MCF 10A (cell line): ENCODE measurements at regions of chr9 and their contacts with region 1.

Region 1: GRCh38 chr9:26744191-26744965 is 148.2 kb downstream of the CAAP1 start:
- DNase-seq: peak; percentile 47
- H3K4me3 Mint-ChIP-seq: no peak overlapping the region
- H3K27ac Mint-ChIP-seq: no peak overlapping the region
- H3K4me1 Mint-ChIP-seq: peaks cover 9% of the 10 kb centered on the region
- H3K27me3 Mint-ChIP-seq: peaks cover 33% of the 10 kb centered on the region
- CTCF ChIP-seq: peak; percentile 69

Region 2: DNA sequence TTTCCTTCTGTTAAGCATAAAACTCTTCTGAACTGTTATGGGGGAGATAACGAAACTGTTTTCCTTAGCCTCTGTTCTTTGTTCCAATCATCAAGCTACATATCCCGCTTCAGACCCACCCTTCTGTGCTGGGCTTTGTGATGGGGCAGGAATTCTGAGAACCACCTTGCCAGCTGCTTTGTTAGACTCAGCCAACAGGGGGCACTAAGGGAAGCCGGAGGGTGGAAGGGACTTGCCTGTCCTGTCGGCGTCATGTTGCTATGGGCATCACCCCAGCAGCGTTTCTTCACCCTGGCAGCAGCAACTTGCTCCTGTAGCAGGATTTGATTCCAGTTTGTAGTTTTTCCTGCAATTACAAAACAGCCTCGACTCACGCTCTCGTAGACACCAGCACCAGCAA is 20.9 kb before region 1 on chr9:
- CTCF ChIA-PET with region 1: no interaction called
- POLR2A ChIA-PET with region 1: no interaction called
- intact Hi-C with region 1: no loop called
- DNase-seq: peak; percentile 72
- H3K4me3 Mint-ChIP-seq: peak overlapping the region; percentile 50
- H3K27ac Mint-ChIP-seq: no peak overlapping the region
- H3K4me1 Mint-ChIP-seq: no peaks in the 10 kb centered on the region
- H3K27me3 Mint-ChIP-seq: peaks cover 64% of the 10 kb centered on the region
- CTCF ChIP-seq: peak; percentile 48

Region 3: DNA sequence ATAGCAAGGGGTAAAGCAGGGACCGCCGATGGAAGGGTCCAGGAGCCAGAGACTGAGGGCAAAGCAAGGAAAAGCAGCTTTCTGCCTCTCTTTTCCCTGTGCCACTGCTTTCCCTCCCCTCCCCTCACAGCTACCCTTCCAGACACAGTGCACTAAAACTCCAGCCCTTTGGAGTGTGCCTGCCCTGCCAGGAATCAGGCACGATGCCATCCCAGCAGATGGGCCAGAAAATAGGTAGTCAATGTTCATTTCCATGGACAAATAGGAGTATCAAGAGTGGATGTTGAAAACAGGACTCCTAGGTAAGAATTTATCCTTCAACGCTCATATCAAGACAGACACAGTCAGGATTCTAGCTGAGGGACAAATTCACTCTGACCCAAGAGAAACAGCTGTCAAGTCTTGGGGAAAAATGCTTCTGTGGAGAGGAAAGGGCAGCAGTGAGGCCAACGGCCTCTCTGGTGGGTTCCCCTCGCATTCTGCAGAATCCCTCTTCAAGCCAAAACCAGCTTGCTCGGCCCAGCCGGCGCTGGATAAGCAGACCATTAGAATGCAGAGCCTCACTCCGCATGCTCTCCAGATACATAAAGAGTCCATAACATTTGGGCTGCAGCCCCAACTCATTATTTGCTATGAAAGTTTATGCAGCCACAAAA is 10.3 kb after region 1 on chr9:
- CTCF ChIA-PET with region 1: no interaction called
- POLR2A ChIA-PET with region 1: no interaction called
- intact Hi-C with region 1: no loop called
- DNase-seq: no peak
- H3K4me3 Mint-ChIP-seq: no peak overlapping the region
- H3K27ac Mint-ChIP-seq: no peak overlapping the region
- H3K4me1 Mint-ChIP-seq: no peaks in the 10 kb centered on the region
- H3K27me3 Mint-ChIP-seq: no peaks in the 10 kb centered on the region
- CTCF ChIP-seq: no peak

Region 4: GRCh38 chr9:26856413-26857032 is 112.1 kb after region 1 on chr9:
- CTCF ChIA-PET with region 1: interaction called, 29 read pairs
- POLR2A ChIA-PET with region 1: no interaction called
- intact Hi-C with region 1: loop called (anchors 1 kb)
- DNase-seq: peak; percentile 76
- H3K4me3 Mint-ChIP-seq: no peak overlapping the region
- H3K27ac Mint-ChIP-seq: no peak overlapping the region
- H3K4me1 Mint-ChIP-seq: no peaks in the 10 kb centered on the region
- H3K27me3 Mint-ChIP-seq: no peaks in the 10 kb centered on the region
- CTCF ChIP-seq: peak; percentile 83

Region 5: GRCh38 chr9:26863074-26863473 is 118.7 kb after region 1 on chr9:
- CTCF ChIA-PET with region 1: interaction called, 29 read pairs
- POLR2A ChIA-PET with region 1: no interaction called
- intact Hi-C with region 1: no loop called
- DNase-seq: peak; percentile 15
- H3K4me3 Mint-ChIP-seq: no peak overlapping the region
- H3K27ac Mint-ChIP-seq: no peak overlapping the region
- H3K4me1 Mint-ChIP-seq: no peaks in the 10 kb centered on the region
- H3K27me3 Mint-ChIP-seq: no peaks in the 10 kb centered on the region
- CTCF ChIP-seq: peak; percentile 36

Region 6: DNA sequence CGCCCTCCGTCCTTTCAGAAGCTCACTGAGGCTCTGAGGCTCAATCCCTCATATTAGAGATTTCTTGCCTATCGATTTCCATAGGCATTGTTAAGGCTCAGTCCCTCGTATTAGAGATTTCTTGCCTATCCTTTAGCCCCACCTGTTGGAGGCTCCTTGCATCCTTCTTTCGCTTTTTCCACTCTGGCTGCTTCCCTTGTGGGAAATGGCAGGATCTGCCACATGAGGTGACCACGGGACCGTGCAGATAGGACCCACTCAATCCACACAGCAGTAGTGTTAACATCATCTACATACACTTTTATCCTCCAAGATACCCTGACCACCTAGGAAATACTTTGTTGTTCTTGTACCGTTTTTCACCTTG is 231.3 kb after region 1 on chr9:
- CTCF ChIA-PET with region 1: no interaction called
- POLR2A ChIA-PET with region 1: no interaction called
- intact Hi-C with region 1: loop called (anchors 5 kb)
- DNase-seq: peak; percentile 70
- H3K4me3 Mint-ChIP-seq: no peak overlapping the region
- H3K27ac Mint-ChIP-seq: peak overlapping the region; percentile 94
- H3K4me1 Mint-ChIP-seq: peaks cover 13% of the 10 kb centered on the region
- H3K27me3 Mint-ChIP-seq: no peaks in the 10 kb centered on the region
- CTCF ChIP-seq: peak; percentile 32